PC-9 (cell line): ENCODE measurements at regions of chr6 and their contacts with region 1.

Region 1: DNA sequence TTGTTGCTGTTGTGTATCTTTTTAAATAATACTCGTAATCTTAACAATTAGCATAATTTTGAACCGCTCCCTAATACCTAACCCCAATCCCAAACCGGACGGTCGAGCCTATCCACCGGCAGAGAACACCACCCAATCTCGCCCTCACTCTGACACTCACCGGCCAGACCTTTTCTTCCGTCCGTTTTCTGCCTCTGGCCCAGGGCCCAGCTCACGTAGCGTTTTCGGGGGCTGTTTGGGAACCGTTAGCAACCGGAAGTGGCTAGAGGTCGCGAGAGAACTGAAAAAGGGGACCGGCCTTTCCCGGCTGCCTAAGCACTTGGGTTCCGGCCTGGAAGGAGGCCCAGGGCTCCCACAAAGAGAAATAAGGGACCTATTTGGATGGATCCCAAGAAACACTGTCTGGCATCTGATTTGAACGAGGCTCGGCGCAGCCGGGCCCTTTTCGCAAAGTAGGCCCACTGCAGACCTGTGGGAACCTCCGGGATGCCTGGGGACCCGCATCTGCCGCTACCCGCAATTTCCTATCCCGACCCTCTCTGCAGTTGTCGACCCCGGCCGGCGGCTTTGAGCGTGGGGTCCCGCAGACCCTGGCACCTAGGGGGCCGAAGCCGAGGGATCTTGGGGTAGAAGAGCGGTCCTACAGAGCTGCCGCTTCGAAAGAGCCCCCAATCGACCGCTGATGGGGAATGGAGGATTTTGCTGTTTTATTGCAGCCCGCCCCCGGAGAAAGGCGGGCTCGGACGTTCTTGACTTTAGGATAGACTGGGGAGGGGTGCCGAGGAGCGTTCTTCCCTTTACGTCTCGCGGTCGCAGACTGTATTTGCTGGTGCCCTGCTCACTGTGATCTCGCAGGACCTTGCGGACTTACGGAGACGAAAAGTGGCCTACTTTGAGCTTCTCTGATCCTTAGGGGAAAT is 4.8 kb upstream of the ZKSCAN8 start:
- DNase-seq: peak; percentile 77 to 87
- H3K4me3 ChIP-seq: peak overlapping the region; percentile 84
- H3K27ac ChIP-seq: peak overlapping the region; percentile 17; the same call in 1 of the 2 replicates
- H3K4me1 ChIP-seq: peaks cover 18% of the 10 kb centered on the region
- H3K27me3 ChIP-seq: no peaks in the 10 kb centered on the region
- CTCF ChIP-seq: no peak

Region 2: DNA sequence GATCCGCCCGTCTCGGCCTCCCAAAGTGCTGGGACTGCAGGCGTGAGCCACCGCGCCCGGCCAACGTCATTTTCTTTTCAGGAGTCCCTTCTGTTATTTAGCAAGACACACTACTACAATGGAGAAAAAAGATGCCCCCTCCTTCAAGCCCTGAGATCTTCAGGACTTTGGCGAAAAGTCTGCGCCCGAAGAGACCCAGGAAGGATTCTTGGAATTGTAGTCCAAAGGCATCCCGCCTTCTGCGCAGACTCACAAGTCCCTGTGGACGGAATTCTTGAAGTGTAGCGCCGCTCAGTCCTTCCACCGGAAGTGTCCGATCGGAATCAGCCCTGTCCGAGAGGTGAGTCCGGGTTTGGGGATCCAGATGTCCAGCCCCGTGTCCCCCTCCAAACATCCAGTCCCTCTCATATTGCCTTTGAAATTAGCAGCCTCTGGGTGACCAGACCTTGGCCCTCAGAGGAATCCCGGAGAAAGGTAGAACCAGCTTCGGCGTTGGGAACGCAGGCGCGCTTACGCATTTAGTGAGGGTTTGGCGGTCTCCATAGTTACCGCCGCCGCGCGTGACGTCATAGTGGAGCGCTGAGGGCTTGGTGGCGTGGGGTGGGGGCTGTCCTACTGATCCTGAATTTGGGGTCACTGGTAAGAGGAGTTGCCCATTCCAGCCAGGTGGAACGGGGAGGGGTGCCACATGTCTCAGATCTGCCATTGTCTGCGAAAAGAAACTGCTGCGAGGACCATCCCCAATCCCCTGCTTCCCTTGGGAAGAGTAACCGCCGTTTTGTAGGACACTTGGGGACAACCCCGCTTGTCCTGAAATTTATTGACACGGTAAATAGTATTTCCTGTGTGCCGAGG is 56.0 kb before region 1 on chr6:
- CTCF ChIA-PET with region 1: no interaction called
- POLR2A ChIA-PET with region 1: no interaction called
- intact Hi-C with region 1: loop called (anchors 2 kb)
- DNase-seq: peak; percentile 89 to 95
- H3K4me3 ChIP-seq: peak overlapping the region; percentile 86
- H3K27ac ChIP-seq: peak overlapping the region; percentile 98
- H3K4me1 ChIP-seq: peaks cover 15% of the 10 kb centered on the region; the same call in 1 of the 2 replicates
- H3K27me3 ChIP-seq: no peaks in the 10 kb centered on the region
- CTCF ChIP-seq: no peak

Region 3: GRCh38 chr6:28212510-28213212 is 75.8 kb after region 1 on chr6:
- CTCF ChIA-PET with region 1: no interaction called
- POLR2A ChIA-PET with region 1: no interaction called
- intact Hi-C with region 1: loop called (anchors 2 kb)
- DNase-seq: peak; percentile 84 to 93
- H3K4me3 ChIP-seq: peak overlapping the region; percentile 64
- H3K27ac ChIP-seq: peak overlapping the region; percentile 70
- H3K4me1 ChIP-seq: peaks cover 21% of the 10 kb centered on the region
- H3K27me3 ChIP-seq: no peaks in the 10 kb centered on the region
- CTCF ChIP-seq: no peak

Region 4: GRCh38 chr6:28252009-28252975 is 115.4 kb after region 1 on chr6 and contains the start of gene ZKSCAN4:
- CTCF ChIA-PET with region 1: no interaction called
- POLR2A ChIA-PET with region 1: interaction called, 6 read pairs
- intact Hi-C with region 1: loop called (anchors 1 kb)
- DNase-seq: peak; percentile 73 to 76
- H3K4me3 ChIP-seq: peak within 1 kb of the TSS; percentile 99
- H3K27ac ChIP-seq: no peak within 1 kb of the TSS
- H3K4me1 ChIP-seq: peaks cover 19% of the 10 kb centered on the region
- H3K27me3 ChIP-seq: no peaks in the 10 kb centered on the region
- CTCF ChIP-seq: no peak
- total RNA-seq, gene ZKSCAN4: 6.0 and 6.7 TPM in 2 replicates

Region 5: DNA sequence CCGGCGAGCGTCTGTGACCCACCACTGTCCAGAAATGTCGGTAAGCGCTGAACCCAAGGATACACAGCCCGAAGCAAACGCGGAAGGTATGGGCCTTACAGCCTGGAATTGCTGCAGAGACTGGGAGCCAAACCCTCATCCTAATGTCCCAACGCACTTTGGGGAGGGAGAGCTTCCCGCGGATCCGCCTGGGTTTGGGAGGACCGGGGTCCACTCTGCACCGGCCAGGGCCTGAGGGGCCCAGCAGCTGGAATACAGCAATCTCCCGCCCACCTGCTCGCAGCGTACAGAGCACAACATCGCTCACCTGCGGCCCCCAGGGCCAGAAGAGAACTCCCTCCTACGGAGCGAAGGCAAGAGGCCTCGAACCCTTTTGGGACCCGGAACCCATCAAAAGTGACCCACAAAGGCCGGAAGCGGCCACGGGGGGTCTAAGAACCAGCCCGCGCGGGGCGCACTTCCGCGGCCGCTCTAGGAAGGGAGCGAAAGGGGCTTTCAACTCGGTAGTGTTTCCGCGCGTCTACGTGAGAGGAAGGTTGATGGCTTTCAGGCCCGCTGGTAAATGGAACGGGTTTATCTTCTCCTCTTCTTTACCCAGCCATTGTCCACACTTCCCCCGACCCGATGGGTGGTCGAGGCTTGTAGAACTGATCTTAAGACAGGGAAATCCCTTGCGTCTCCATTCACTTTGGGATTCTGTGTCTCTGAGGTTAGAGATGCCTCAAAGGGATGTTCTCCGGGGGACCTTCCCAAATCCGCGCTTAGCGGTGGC is 262.7 kb after region 1 on chr6 and contains the start of gene ZSCAN12:
- CTCF ChIA-PET with region 1: interaction called, 4 read pairs
- POLR2A ChIA-PET with region 1: interaction called, 10 read pairs
- intact Hi-C with region 1: loop called (anchors 5 kb)
- DNase-seq: peak; percentile 75 to 84
- H3K4me3 ChIP-seq: peak within 1 kb of the TSS; percentile 74
- H3K27ac ChIP-seq: peak within 1 kb of the TSS; percentile 43
- H3K4me1 ChIP-seq: peaks cover 30% of the 10 kb centered on the region
- H3K27me3 ChIP-seq: no peaks in the 10 kb centered on the region
- CTCF ChIP-seq: peak; percentile 43
- total RNA-seq, gene ZSCAN12: 10.9 and 11.2 TPM in 2 replicates